Heart left ventricle (tissue), 16 donors: ENCODE measurements at regions of chr6 and their contacts with region 1.

Region 1: GRCh38 chr6:71012866-71013469 is 56.1 kb upstream of the B3GAT2 start:
- DNase-seq: peak in 2 of 5 donors; percentile 16 to 31
- ATAC-seq: peak in 3 of 4 donors; percentile 57 to 74 (median 69)
- H3K4me3 ChIP-seq: no peak overlapping the region
- H3K27ac ChIP-seq: no peak overlapping the region
- H3K4me1 ChIP-seq: no peaks in the 10 kb centered on the region
- H3K27me3 ChIP-seq: no peaks in the 10 kb centered on the region
- CTCF ChIP-seq: peak; percentile 62 to 89 (median 77)
- POLR2A ChIP-seq: no peak

Region 2: DNA sequence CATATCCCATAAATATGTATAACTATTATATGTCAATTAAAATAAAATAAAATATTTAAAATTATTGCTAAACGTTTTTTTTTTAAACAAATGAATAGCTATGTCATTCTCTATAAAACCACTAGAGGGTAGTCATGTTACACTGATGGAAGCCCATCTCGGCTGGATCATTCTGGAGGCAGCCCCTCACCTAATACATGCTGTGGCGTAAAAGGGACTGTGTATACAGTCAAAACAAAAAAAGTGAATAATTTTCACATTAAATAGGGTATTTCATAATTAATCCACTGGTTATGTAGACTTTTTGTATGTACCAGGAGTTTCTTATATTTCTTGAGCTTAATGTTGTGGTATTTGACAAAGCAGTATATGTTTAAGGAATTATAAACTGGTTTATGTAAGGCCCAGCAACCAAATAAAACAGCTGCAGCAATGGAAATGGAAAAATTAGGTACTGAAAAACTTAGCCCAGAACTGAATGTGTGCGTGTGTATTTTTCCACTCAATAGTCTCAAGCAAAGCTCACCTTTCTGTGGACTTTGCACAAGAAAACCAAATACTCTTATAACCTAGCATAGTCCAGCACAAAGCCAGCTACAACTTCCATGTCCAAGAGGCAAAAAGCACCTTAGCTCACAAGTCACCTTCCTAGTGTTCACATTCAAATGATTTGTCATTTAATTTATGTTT is 791.8 kb before region 1 on chr6:
- intact Hi-C with region 1: loop called in 4 of 10 experiments (anchors 10 kb)
- DNase-seq: no peak
- ATAC-seq: peak in 2 of 4 donors; percentile 50 to 55
- H3K4me3 ChIP-seq: no peak overlapping the region
- H3K27ac ChIP-seq: no peak overlapping the region
- H3K4me1 ChIP-seq: no peaks in the 10 kb centered on the region
- H3K27me3 ChIP-seq: peaks cover 0 to 11% (median 0%) of the 10 kb centered on the region in 9 donors
- CTCF ChIP-seq: peak; percentile 60 to 85 (median 77)
- POLR2A ChIP-seq: no peak

Region 3: GRCh38 chr6:70310063-70310694 is 702.8 kb before region 1 on chr6:
- intact Hi-C with region 1: loop called in 6 of 10 experiments (anchors 5 to 10 kb)
- DNase-seq: no peak
- ATAC-seq: no peak
- H3K4me3 ChIP-seq: no peak overlapping the region
- H3K27ac ChIP-seq: no peak overlapping the region
- H3K4me1 ChIP-seq: no peaks in the 10 kb centered on the region
- H3K27me3 ChIP-seq: peaks cover 0 to 9% (median 0%) of the 10 kb centered on the region in 9 donors
- CTCF ChIP-seq: peak; percentile 39 to 73 (median 58)
- POLR2A ChIP-seq: no peak

Region 4: GRCh38 chr6:70375882-70376281 is 637.1 kb before region 1 on chr6:
- intact Hi-C with region 1: loop called in 6 of 10 experiments (anchors 2 to 10 kb)
- DNase-seq: no peak
- ATAC-seq: no peak
- H3K4me3 ChIP-seq: no peak overlapping the region
- H3K27ac ChIP-seq: no peak overlapping the region
- H3K4me1 ChIP-seq: no peaks in the 10 kb centered on the region
- H3K27me3 ChIP-seq: no peaks in the 10 kb centered on the region
- CTCF ChIP-seq: peak in 1 of 12 donors; percentile 9
- POLR2A ChIP-seq: no peak

Region 5: DNA sequence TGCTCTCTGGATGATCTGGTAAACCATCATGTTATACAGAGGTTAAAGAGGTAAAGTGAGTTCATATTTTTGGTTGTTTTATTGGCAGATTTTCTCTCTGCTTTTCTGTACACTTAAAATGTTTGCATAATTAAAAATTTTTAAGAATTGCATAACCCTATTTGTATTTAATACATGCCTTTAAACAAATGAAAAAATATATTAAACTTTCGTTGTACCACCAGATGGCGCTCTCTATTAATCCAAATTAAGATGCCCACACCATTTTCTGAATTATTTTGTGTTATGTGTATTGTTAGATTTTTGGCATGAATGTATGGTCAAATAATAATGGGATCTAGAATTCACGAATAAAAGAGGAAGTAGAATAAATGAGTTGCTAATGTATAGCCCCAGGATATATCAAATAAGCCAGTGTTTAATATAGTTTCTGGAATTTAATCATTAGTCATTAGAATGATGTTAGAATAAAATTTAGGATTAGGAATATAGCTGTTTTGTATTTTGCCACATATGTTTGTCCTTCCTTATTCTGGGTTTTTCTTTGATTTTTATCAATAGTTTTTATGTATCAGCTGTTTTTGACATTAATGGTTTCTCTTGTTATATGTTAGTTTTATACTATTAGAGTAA is 306.4 kb before region 1 on chr6:
- intact Hi-C with region 1: loop called in 6 of 10 experiments (anchors 5 to 10 kb)
- DNase-seq: no peak
- ATAC-seq: no peak
- H3K4me3 ChIP-seq: no peak overlapping the region
- H3K27ac ChIP-seq: no peak overlapping the region
- H3K4me1 ChIP-seq: peaks cover 0 to 36% (median 9%) of the 10 kb centered on the region in 12 donors
- H3K27me3 ChIP-seq: no peaks in the 10 kb centered on the region
- CTCF ChIP-seq: peak; percentile 53 to 86 (median 74)
- POLR2A ChIP-seq: no peak

Region 6: GRCh38 chr6:71056656-71057055 is 43.7 kb after region 1 on chr6:
- intact Hi-C with region 1: no loop called
- DNase-seq: no peak
- ATAC-seq: no peak
- H3K4me3 ChIP-seq: no peak overlapping the region
- H3K27ac ChIP-seq: no peak overlapping the region
- H3K4me1 ChIP-seq: no peaks in the 10 kb centered on the region
- H3K27me3 ChIP-seq: no peaks in the 10 kb centered on the region
- CTCF ChIP-seq: no peak
- POLR2A ChIP-seq: no peak